Heart right ventricle (tissue), 16 donors: ENCODE measurements at regions of chr17 and their contacts with region 1.

Region 1: DNA sequence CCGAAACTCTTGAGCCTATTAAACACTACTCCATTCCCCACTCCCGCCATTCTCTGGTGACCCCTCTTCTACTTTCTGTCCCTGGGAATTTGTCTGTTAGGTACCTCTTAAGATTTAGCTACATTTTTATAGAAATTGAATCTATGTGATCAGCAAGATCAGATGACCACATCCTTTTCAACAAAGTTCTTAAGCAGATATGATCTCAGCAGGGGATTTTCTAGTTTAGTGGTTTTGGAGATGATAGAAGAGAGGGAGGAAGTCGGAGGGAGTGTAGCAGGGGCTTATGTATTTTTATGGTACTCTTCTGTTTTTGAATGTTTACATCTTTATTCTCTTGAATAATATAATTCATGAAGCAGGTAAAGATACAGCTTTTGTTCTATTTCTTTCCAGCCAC is 40.8 kb downstream of the RPA1 start:
- DNase-seq: no peak
- ATAC-seq: no peak
- H3K4me3 ChIP-seq: no peak overlapping the region
- H3K27ac ChIP-seq: no peak overlapping the region
- H3K4me1 ChIP-seq: peaks cover 0 to 6% (median 0%) of the 10 kb centered on the region in 9 donors
- H3K27me3 ChIP-seq: no peaks in the 10 kb centered on the region
- CTCF ChIP-seq: no peak

Region 2: DNA sequence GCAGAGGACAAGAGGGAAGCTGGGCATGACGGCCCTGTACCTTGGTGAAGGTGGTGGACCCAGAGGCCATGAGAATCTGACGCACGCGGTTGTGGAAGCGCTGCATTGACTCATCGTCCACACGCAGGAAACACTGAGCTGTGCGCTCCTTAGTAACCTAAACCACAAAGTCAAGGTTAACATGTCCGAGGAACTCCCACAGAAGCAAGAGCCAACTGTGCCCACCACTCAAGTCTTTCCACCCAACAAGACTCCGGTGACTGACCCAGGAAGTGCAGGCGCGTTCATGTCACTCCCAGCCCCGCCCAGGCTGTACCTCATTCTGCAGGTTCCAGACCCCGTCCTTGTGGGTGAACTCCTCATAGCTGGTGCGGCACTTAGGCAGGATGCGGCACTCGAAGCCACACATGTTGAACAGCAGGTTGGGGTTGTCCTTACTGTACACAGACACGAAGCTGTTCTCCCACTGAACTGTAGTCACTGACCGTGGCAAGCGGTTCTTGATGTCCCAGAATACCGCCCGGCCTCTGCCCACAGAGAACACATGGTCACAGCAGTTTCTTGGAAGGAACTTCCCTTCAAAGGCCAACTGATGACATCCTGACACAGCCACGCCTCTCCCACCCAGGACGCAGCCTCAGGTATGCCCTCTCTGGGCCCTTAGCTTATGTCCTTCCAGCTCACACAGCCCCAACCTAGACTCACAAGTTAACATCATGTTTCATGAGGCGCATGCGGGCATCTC is 197.4 kb before region 1 on chr17:
- intact Hi-C with region 1: loop called in 4 of 10 experiments (anchors 5 to 10 kb)
- DNase-seq: no peak
- ATAC-seq: no peak
- H3K4me3 ChIP-seq: no peak overlapping the region
- H3K27ac ChIP-seq: no peak overlapping the region
- H3K4me1 ChIP-seq: peaks cover 0 to 28% (median 14%) of the 10 kb centered on the region in 9 donors
- H3K27me3 ChIP-seq: no peaks in the 10 kb centered on the region
- CTCF ChIP-seq: no peak

Region 3: GRCh38 chr17:1769822-1770477 is 100.6 kb before region 1 on chr17:
- intact Hi-C with region 1: no loop called
- DNase-seq: no peak
- ATAC-seq: peak in 1 of 8 donors; percentile 12
- H3K4me3 ChIP-seq: no peak overlapping the region
- H3K27ac ChIP-seq: no peak overlapping the region
- H3K4me1 ChIP-seq: peaks cover 0 to 43% (median 11%) of the 10 kb centered on the region in 9 donors
- H3K27me3 ChIP-seq: no peaks in the 10 kb centered on the region
- CTCF ChIP-seq: no peak